Heart left ventricle (tissue), 16 donors: ENCODE measurements at regions of chr20 and their contacts with region 1.

Region 1: DNA sequence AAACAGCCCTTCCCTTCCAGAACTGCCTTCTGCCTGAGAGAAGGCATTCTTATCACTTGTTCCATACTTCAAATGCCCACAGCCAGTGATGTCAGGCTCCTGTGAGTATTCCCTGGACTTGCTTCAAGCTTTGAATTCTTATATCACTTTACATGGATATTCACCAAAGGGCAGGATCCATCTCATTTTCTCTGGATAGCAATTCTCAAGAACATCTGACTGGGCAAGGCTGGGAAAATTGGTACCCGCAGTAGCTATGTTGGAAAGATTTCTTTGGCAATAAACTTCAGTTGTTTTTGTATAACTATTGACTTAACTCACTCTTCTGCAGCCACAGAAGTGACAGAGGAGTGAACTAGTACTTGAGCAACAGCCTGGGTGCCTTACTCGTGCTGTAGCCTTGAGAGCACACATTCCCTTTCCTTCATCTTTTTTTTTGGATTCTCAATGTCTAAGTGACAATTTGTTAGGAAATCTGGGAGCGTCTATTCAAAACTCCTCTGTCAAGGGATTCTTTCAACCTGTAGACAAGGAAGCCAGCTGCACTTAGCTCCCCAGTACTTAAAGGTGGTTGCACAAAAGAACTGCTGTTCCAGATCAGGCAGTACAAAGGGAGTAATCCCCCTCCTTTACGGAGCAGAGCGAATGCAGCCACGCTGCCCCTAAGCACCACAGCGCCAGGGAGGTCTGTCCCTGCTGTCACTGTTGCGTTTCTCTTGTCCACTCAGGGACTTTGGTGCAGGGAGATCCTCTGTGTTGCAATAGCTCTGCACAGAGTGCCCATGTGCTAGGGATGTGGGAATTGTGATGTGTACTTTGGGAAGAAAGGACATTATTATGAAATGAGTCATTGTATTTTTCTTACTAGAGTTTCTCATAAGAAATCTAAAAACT is 69.6 kb downstream of the JAG1 start:
- DNase-seq: peak; percentile 42 to 71 (median 64)
- ATAC-seq: peak; percentile 82 to 94 (median 89)
- H3K4me3 ChIP-seq: no peak overlapping the region
- H3K27ac ChIP-seq: peak overlapping the region; percentile 33 to 77 (median 71)
- H3K4me1 ChIP-seq: peaks cover 0 to 46% (median 8%) of the 10 kb centered on the region in 12 donors
- H3K27me3 ChIP-seq: no peaks in the 10 kb centered on the region
- CTCF ChIP-seq: no peak
- POLR2A ChIP-seq: no peak

Region 2: DNA sequence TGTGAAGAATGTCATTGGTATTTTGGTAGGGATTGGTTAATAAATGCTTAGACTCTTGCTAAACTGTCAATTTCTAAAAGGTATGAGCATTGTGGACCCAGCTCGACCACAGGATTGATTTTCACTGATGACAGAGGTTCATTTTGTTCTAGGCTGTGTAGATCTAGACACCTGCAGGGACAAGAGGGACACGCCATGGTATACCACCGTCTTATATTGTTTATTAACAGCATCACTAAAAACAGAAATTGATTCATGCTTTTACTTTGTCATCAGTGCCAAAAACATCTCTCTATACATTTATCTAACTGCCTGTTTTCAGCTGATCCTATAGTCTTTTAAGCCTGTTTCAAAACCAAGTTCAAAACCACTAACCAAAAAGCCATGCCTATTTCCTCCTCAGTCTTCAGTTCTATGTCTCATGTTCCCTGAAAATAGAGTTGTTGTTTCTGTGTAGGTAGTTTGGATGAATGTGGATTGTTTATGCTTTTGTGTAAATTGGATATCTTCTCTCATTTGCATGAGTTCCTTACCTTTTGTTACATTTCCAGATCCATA is 40.2 kb before region 1 on chr20:
- intact Hi-C with region 1: loop called in 2 of 10 experiments (anchors 5 kb)
- DNase-seq: no peak
- ATAC-seq: no peak
- H3K4me3 ChIP-seq: no peak overlapping the region
- H3K27ac ChIP-seq: no peak overlapping the region
- H3K4me1 ChIP-seq: peaks cover 0 to 18% (median 2%) of the 10 kb centered on the region in 12 donors
- H3K27me3 ChIP-seq: no peaks in the 10 kb centered on the region
- CTCF ChIP-seq: no peak
- POLR2A ChIP-seq: no peak